ENCODE measurements at regions of chr16 and their contacts with region 1.

Region 1: GRCh38 chr16:29862884-29863668 is at the start of gene CDIPT:
- H3K4me3 Mint-ChIP-seq: peak within 1 kb of the TSS; percentile 96
- H3K27ac Mint-ChIP-seq: peak within 1 kb of the TSS; percentile 98
- H3K4me1 Mint-ChIP-seq: peaks cover 29% of the 10 kb centered on the region
- H3K27me3 Mint-ChIP-seq: peaks cover 5% of the 10 kb centered on the region

Region 2: DNA sequence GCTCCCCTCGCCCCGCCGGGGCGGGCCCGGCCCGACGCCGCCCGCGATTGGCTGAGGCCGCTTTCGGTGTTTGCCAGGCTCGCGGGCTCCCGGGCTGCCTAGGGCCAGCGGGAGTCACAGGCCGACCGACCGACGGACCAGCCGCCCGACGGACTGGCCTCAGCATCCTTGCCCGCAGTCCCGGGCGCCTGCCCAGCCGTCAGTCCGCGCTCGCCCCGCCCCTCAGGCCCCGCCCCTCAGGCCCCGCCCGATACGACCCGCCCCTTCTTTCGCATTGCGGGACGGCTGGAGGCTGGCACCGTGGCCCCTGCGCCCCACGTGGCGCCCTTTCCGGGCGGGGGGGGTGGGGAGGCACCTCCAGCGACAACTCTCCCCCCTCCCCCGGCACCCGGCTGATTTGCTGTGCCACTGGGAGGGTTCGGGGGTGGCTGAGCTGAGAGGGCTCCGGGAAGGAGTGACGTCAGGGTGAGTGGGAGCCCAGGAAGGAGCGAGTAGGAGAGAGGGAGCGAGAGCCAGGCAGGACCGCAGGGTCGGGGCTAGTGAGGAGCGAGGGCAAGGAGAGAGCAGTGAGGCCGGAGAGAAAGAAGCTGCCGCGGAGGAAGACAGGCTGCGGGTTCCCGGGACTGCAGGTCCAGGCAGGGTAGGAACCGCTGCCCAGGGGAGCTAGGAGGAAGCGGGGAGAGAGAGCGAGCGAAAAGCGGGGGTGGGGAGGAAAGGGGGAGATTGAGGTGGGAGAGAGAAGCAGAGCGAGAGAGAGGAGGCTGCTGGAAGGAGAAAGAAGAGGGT is 37.2 kb after region 1 on chr16 and contains the start of gene ASPHD1:
- intact Hi-C with region 1: loop called (anchors 2 kb)
- H3K4me3 Mint-ChIP-seq: peak within 1 kb of the TSS; percentile 84
- H3K27ac Mint-ChIP-seq: peak within 1 kb of the TSS; percentile 64
- H3K4me1 Mint-ChIP-seq: peaks cover 14% of the 10 kb centered on the region
- H3K27me3 Mint-ChIP-seq: peaks cover 56% of the 10 kb centered on the region

Region 3: DNA sequence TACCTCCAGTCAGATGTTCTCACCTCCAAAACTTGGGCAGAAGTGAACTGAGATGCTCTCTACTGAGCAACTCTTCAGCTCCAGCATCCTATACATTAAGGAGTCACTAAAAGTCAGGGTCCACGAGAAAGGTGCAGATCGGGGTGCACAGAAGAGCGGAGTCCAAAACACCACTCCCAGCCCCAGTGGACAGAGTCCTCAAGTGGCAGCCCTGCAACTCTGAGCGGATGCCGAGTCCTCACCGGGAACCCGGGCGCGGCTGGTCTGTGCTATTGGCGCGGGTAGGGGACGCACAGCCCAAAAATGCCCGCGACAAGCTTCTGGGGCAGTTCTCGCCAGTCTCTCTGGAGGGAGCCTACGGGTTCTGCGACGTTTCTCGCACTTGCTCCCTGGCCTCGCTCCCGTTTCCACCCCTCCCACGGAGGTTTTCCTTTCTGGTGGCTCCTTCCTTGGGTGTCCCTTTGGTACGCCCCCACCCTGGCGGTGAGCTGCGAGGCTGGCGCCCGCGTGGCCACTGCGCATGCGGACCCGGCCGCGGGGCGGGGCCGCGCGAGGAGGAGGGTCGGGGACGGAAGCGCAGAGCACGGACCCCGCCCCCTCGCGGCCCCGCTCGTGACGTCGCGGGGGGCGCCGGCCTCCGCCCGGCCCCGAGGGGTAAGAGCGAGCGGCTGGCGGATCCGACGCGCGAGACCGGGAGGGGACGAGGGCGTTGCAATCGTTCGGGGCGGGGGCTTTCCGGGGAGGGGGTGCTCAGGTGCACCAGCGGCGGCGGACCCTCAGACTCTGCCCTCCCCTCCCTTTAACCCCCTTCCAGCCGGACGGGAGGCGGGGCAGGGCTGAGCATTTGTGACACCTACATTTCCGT is 98.6 kb after region 1 on chr16 and contains the start of gene TMEM219:
- intact Hi-C with region 1: loop called (anchors 1 kb)
- H3K4me3 Mint-ChIP-seq: peak within 1 kb of the TSS; percentile 76
- H3K27ac Mint-ChIP-seq: peak within 1 kb of the TSS; percentile 96
- H3K4me1 Mint-ChIP-seq: peaks cover 17% of the 10 kb centered on the region
- H3K27me3 Mint-ChIP-seq: no peaks in the 10 kb centered on the region

Region 4: DNA sequence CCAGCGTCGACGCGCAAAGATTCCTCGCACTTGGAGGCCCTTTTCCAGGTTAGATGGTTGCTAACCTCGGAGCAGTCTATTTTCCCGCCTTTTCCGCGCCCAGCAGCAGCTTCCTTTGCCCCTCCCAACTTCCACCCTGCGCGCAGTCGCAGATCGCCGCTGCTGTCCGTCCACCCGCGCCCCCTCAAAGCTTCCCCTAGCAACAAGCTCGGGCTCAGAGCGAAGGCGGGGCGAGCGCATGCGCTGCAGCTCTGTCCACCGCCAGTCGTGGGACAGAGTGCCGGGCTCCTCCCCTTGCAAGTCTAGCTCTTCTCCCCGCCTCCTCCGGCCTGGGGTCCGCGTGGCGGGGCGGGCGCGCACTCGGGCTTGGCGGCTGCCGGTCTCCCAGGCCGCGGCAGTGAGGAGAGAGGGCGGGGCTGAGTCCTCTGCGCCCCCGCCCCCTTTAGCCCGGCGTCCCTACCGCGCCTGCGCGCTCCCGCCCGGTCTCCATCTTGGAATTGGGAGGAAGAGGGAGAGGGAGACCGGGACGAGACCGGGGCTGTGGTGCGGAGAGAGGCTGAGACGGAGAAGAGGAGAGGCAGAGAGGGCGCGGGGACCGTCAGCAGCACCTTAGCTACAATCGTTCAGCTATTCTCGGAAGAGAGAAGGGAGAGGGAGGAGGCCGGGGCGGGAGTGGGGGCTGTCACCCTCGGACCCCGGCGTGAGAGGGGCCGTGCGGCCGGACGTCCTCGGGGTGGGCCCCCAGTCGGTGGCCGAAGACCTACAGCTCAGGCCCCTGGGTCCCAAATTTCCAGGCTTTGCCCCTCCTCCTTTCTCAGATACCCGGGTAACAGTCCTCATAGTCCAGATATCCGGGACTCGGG is 110.5 kb after region 1 on chr16 and contains the start of gene TAOK2:
- intact Hi-C with region 1: loop called (anchors 1 kb)
- H3K4me3 Mint-ChIP-seq: peak within 1 kb of the TSS; percentile 90
- H3K27ac Mint-ChIP-seq: peak within 1 kb of the TSS; percentile 88
- H3K4me1 Mint-ChIP-seq: peaks cover 63% of the 10 kb centered on the region
- H3K27me3 Mint-ChIP-seq: no peaks in the 10 kb centered on the region

Measured in dendritic cell treated with granulocyte-macrophage colony-stimulating factor and Interleukin-4, amounts not matched to agents 40 ng/mL and 50 ng/mL, for 4 days (primary cell).